ENCODE measurements at regions of chr2 and their contacts with region 1.

Region 1: DNA sequence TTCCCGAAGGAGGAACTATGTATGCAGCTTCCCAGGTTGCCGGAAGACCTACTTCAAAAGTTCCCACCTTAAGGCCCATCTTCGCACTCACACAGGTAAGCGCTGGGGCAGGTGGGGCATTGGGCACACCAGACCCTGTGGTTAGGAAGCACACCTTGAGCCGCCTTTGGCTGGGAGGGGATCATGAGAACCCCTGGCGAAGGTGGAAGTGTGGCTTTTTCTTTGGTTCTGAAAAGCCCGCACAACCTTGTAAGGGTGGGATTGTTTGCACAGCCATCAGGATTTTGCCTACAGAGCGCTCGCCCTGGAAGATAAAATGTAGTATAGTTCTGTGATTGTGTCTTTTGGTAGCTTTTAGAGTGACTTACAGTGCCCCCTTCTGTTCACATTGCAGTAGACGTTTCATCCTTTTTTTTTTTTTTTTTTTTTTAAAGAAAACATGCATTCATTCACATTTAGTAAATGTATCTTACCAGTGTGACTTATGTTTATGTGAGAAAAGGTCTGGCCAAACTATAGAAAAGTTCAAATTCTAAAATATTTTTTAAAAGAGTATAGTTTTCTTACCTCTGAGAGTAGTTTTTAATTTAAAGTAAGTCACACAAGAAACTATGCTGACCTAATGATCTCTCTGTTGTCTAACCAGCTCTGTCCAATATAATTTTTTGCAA is 5.3 kb downstream of the KLF11 start:
- DNase-seq: peak; percentile 55
- ATAC-seq: no peak
- H3K4me3 ChIP-seq: no peak overlapping the region
- H3K27ac ChIP-seq: no peak overlapping the region
- H3K4me1 ChIP-seq: peaks cover 5% of the 10 kb centered on the region
- H3K27me3 ChIP-seq: no peaks in the 10 kb centered on the region
- CTCF ChIP-seq: peak; percentile 80

Region 2: DNA sequence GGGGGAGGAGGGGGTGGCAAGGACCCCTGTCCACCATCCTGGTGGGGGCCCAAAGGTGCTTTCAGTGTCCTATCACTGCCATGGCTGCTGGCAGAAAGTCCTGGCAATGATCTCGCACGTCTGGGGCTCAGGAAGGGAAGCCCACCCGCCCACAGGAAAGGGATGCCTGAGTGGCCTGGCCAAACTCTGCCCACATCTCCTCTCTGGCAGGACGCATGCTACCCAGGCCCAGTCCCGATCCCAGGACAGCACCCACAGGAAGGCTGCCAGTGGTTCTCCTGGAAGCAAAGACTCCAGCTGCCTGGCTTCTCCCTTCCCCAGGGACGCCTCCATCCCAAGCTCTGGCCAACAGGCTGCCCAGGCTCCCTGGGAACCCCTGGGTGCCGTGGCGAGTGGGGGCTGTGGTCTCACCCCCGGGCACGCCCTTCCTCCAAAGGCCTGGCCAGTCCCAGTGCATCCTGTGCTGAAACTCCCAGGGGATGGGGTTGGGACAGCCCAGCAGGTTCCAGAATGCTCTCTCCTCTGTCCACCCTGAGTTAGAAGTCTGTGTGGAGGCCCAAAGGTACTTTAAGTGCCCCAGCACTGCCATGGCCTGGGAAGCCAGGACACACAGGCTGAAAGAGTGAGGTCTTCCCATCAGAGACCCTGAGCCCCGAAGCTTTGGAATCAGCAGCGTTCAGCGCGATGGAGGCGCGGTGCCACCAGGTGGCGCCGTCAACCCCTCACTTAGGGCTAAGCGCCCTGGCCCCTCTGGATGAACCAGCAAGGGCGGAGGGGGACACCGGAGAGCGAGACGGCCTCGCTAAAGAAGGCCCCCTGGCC is 235.1 kb before region 1 on chr2:
- CTCF ChIA-PET with region 1: interaction called, 4 read pairs
- POLR2A ChIA-PET with region 1: no interaction called
- intact Hi-C with region 1: loop called (anchors 1 kb)
- DNase-seq: peak; percentile 80
- ATAC-seq: peak; percentile 76
- H3K4me3 ChIP-seq: peak overlapping the region; percentile 16; the same call in 1 of the 2 replicates
- H3K27ac ChIP-seq: no peak overlapping the region
- H3K4me1 ChIP-seq: peaks cover 41% of the 10 kb centered on the region
- H3K27me3 ChIP-seq: no peaks in the 10 kb centered on the region
- CTCF ChIP-seq: peak; percentile 96

Region 3: DNA sequence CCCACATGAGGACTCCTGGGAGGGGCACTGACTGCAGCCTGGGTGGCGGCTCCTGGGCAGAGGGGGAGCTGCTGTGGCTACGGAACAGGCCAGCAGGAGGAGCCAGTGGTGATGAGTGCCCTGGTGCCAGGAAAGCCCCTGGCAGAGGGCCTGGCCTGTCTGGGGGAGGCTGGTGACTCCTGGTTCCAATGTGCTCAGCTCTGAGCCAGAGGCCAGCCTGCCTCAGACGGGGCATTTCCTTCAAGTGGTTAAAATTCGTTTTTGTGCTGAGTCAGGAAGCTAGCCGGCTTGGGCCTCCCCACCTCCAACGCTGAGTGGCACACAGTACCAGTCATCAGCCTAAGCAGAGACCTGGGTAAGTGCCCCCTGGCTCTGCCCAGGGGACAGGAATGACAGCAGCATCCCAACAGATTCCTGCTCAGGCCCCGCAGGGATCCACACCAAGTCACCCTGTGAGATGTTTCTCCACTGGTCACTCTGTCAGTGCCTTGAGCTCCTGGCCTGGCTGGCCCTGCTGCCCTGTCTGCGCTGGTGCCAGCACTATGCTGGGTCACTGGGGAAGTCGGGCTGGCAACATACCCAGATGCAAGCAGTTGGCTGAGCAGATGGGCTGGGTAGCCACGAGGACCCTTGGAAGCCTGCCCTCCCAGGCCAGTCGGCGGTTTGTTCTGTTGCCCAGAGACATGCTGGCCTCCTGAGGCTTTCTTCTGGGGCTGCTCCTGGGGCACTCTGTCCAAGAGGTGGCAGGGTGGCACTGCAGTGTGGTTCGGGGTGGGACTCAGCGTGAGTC is 12.3 kb before region 1 on chr2:
- CTCF ChIA-PET with region 1: interaction called, 20 read pairs
- POLR2A ChIA-PET with region 1: no interaction called
- intact Hi-C with region 1: no loop called
- DNase-seq: peak; percentile 79
- ATAC-seq: peak; percentile 77
- H3K4me3 ChIP-seq: no peak overlapping the region
- H3K27ac ChIP-seq: peak overlapping the region; percentile 38; the same call in 1 of the 2 replicates
- H3K4me1 ChIP-seq: peaks cover 12% of the 10 kb centered on the region
- H3K27me3 ChIP-seq: no peaks in the 10 kb centered on the region
- CTCF ChIP-seq: peak; percentile 78

Measured in PC-3 (cell line).